ENCODE measurements at regions of chr2 and their contacts with region 1.

Region 1: DNA sequence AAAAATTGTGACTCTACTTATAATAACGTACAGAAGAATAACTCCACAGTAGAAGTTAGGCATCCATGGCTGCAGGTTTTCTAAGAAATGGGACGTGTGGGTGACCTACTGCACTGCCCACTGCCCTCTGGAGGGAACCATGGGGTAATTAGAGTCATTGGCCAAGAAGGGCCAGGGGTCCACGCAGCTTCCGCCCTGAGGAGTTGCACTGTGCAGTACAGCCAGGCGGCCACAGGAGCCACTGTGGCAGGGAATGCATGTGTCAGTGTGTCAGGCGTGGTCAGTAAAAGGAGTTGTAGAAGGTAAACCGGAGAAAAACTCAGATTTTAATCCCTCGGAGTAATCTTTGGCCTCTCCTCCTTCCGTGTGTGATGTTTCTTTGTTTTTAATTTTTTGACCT is 24.8 kb downstream of the NCK2 start:
- DNase-seq: no peak
- ATAC-seq: peak; percentile 23
- H3K4me3 ChIP-seq: no peak overlapping the region
- H3K4me3 Mint-ChIP-seq: peak overlapping the region; percentile 51 to 93 (median 64)
- H3K27ac ChIP-seq: peak overlapping the region; percentile 46
- H3K27ac Mint-ChIP-seq: peak overlapping the region; percentile 60 to 94 (median 89)
- H3K4me1 ChIP-seq: peaks cover 78 to 86% of the 10 kb centered on the region in 2 donors
- H3K4me1 Mint-ChIP-seq: peaks cover 77 to 100% (median 96%) of the 10 kb centered on the region in 7 donors
- H3K27me3 ChIP-seq: no peaks in the 10 kb centered on the region
- H3K27me3 Mint-ChIP-seq: no peaks in the 10 kb centered on the region

Region 2: GRCh38 chr2:105744091-105744908 is 25.2 kb before region 1 on chr2:
- CTCF ChIA-PET with region 1: no interaction called
- POLR2A ChIA-PET with region 1: interaction called, 31 read pairs
- intact Hi-C with region 1: no loop called
- DNase-seq: peak; percentile 57 to 79 (median 69)
- ATAC-seq: peak; percentile 87
- H3K4me3 ChIP-seq: peak overlapping the region; percentile 24
- H3K4me3 Mint-ChIP-seq: peak overlapping the region; percentile 76 to 96 (median 90)
- H3K27ac ChIP-seq: peak overlapping the region; percentile 80
- H3K27ac Mint-ChIP-seq: peak overlapping the region; percentile 90 to 96 (median 95)
- H3K4me1 ChIP-seq: peaks cover 48 to 54% of the 10 kb centered on the region in 2 donors
- H3K4me1 Mint-ChIP-seq: peaks cover 49 to 82% (median 77%) of the 10 kb centered on the region in 7 donors
- H3K27me3 ChIP-seq: no peaks in the 10 kb centered on the region
- H3K27me3 Mint-ChIP-seq: no peaks in the 10 kb centered on the region

Region 3: DNA sequence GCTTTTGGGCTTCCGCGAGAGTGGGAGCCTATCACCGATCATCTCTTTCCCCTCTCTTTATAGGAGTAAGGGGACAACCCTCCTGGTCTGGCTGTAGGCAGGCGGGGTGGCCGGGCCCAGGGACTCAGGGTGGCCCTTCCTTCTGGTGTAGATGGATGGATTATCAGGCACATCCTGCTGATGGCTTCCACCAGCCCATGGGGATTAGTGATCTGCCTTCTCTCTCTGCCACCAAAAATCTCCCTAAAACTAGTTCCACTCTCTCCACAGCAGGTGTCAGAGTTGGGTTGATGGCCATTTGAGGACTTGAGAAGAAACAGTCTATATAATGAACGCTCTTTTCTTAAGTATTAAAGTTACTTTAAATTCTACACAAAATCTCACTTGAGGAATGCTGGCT is 12.6 kb after region 1 on chr2:
- CTCF ChIA-PET with region 1: interaction called, 4 read pairs
- POLR2A ChIA-PET with region 1: interaction called, 21 read pairs
- intact Hi-C with region 1: loop called (anchors 1 to 2 kb)
- DNase-seq: peak in 1 of 9 donors; percentile 44
- ATAC-seq: peak; percentile 42
- H3K4me3 ChIP-seq: peak overlapping the region; percentile 52
- H3K4me3 Mint-ChIP-seq: peak overlapping the region; percentile 19 to 88 (median 78)
- H3K27ac ChIP-seq: peak overlapping the region; percentile 54
- H3K27ac Mint-ChIP-seq: peak overlapping the region; percentile 79 to 98 (median 91)
- H3K4me1 ChIP-seq: peaks cover 97 to 99% of the 10 kb centered on the region in 2 donors
- H3K4me1 Mint-ChIP-seq: peaks cover 70 to 97% (median 93%) of the 10 kb centered on the region in 7 donors
- H3K27me3 ChIP-seq: no peaks in the 10 kb centered on the region
- H3K27me3 Mint-ChIP-seq: no peaks in the 10 kb centered on the region

Region 4: GRCh38 chr2:106011380-106011779 is 241.9 kb after region 1 on chr2:
- CTCF ChIA-PET with region 1: no interaction called
- POLR2A ChIA-PET with region 1: no interaction called
- intact Hi-C with region 1: no loop called
- DNase-seq: no peak
- ATAC-seq: no peak
- H3K4me3 ChIP-seq: no peak overlapping the region
- H3K4me3 Mint-ChIP-seq: no peak overlapping the region
- H3K27ac ChIP-seq: no peak overlapping the region
- H3K27ac Mint-ChIP-seq: no peak overlapping the region
- H3K4me1 ChIP-seq: no peaks in the 10 kb centered on the region
- H3K4me1 Mint-ChIP-seq: peaks cover 0 to 16% (median 9%) of the 10 kb centered on the region in 7 donors
- H3K27me3 ChIP-seq: no peaks in the 10 kb centered on the region
- H3K27me3 Mint-ChIP-seq: no peaks in the 10 kb centered on the region

Measured in naive thymus-derived CD4-positive, alpha-beta T cell (primary cell).